Left lung (tissue), 14 donors: ENCODE measurements at regions of chr3 and their contacts with region 1.

Region 1: DNA sequence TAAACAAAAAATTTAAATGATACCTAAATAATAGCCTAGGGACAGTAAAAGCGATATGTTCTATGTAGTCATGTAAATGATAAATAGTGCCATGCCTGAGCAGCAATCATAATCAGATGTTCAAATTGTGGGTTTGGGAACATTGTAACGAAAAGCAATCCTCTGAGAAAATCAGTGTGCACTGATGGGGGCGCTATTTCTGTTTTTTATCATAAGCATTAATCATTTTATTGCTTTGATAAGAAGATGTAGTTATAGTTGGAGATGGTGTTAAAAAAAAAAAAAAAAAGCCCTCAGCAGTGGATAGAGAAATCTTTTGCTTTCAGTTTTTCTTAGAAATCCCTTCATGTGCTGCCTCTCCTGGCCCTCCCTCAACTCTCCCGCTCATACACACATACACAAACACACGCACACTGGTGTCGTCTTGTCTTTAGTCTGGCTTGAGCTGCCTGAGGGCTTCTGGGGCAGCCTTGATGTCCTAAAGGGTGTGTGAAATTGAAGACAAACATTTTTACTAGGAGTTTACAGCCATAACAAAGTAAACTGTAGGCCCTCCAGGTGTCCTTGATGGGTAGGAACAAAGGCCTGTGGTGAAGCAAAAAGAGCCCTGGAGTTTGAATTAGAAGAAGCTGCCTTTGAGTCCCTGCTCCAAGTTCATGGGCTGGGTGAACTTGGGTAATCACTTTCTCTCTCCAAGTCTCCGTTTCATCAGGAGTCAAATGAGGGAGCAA is 428.1 kb downstream of the SOX2 start:
- DNase-seq: no peak
- ATAC-seq: no peak
- H3K4me3 ChIP-seq: no peak overlapping the region
- H3K27ac ChIP-seq: no peak overlapping the region
- H3K4me1 ChIP-seq: no peaks in the 10 kb centered on the region
- H3K27me3 ChIP-seq: no peaks in the 10 kb centered on the region
- CTCF ChIP-seq: no peak

Region 2: DNA sequence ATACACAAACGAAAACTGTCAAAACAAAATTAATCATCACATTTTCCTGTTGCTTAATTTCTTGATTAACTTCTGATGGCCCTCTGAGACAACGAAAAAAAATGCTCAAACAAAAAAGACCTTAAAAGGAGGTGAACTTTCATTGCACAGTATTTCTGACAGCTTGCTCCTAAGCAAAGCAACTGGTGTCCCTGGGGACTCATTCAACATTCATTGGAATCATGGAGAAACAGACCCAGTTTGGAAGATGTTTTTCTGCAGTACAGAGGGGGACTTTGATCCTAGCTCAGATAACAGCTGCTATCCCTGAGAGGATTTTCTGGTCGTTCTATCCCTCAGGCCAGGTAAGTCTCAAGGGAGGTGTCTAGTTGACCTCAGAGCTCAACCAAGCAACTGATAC is 274.8 kb after region 1 on chr3:
- intact Hi-C with region 1: no loop called
- DNase-seq: no peak
- ATAC-seq: no peak
- H3K4me3 ChIP-seq: no peak overlapping the region
- H3K27ac ChIP-seq: no peak overlapping the region
- H3K4me1 ChIP-seq: no peaks in the 10 kb centered on the region
- H3K27me3 ChIP-seq: no peaks in the 10 kb centered on the region
- CTCF ChIP-seq: no peak

Region 3: DNA sequence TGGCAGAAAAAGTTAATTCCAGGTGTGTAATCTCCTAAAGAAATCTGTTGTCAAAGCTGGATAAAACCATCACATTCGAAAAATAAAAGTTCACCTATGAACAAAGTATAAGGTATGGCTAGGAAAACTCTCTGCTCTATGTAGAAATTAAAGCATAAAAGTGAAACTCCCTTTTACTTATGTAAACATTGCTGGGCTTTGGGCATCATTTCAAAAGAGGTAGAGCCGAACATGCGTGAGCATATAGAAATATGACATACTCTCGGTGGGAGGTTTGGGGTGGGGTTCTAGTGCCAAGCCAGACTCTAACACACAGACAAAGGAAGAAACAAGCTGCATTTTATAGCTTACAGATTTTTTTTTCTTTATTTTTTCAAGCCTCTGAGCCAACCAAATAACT is 346.7 kb after region 1 on chr3:
- intact Hi-C with region 1: loop called in 1 of 2 experiments (anchors 5 kb)
- DNase-seq: no peak
- ATAC-seq: no peak
- H3K4me3 ChIP-seq: no peak overlapping the region
- H3K27ac ChIP-seq: no peak overlapping the region
- H3K4me1 ChIP-seq: no peaks in the 10 kb centered on the region
- H3K27me3 ChIP-seq: no peaks in the 10 kb centered on the region
- CTCF ChIP-seq: no peak